ENCODE measurements at regions of chr11 and their contacts with region 1.

Region 1: DNA sequence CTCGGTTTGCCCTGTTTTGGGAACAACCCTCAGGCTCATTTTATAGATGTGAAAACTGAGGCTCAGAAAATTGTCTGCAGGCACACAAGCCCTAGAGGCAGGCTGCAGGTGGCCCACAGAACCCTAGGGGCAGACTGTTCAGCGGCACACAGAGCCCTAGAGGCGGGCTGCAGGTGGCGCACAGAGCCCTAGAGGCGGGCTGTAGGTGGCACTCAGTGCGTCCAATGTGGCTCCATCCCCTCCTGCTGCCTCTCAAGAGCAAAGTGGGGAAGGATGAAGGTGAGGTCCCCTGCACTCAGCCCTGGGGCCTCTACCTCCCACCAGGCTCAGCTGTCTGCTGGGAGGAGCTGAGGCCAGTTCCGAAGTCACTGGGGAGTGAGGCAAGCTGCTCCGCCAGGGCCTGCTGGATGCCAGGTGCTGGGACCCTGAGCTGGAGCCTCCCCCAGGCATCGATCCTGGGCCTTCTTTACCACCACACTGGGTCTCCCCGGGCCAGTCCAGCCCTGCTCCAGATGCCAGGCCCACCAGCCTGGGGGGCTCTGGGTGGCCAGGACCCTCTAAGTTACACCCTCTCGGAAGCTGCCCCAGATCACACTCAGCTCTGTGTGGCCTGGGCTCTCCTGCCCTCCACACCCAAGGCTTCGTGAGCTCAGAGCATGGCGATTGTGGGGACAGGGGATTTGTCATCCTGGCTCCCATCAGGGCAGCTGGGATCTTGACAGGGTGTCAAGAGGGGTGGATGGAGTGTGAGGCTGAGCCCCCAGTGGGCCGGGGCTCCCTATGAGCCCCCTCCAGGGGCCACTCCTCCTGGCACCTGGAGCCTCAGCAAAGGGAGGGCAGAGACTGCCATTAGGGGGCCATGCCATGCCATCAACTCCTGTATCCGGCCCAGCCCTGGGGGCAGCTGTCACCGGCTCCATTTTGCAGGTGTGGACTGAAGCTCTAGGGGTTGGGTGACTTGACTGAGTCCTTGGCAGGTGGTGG is 2.1 kb downstream of the ACY3 start:
- DNase-seq: peak; percentile 56
- ATAC-seq: peak; percentile 99
- H3K4me3 ChIP-seq: no peak overlapping the region
- H3K27ac ChIP-seq: no peak overlapping the region
- H3K4me1 ChIP-seq: peaks cover 26% of the 10 kb centered on the region
- H3K27me3 ChIP-seq: no peaks in the 10 kb centered on the region
- CTCF ChIP-seq: peak; percentile 81
- EP300 ChIP-seq: no peak
- POLR2A ChIP-seq: no peak
- RAD21 ChIP-seq: peak; percentile 79

Region 2: DNA sequence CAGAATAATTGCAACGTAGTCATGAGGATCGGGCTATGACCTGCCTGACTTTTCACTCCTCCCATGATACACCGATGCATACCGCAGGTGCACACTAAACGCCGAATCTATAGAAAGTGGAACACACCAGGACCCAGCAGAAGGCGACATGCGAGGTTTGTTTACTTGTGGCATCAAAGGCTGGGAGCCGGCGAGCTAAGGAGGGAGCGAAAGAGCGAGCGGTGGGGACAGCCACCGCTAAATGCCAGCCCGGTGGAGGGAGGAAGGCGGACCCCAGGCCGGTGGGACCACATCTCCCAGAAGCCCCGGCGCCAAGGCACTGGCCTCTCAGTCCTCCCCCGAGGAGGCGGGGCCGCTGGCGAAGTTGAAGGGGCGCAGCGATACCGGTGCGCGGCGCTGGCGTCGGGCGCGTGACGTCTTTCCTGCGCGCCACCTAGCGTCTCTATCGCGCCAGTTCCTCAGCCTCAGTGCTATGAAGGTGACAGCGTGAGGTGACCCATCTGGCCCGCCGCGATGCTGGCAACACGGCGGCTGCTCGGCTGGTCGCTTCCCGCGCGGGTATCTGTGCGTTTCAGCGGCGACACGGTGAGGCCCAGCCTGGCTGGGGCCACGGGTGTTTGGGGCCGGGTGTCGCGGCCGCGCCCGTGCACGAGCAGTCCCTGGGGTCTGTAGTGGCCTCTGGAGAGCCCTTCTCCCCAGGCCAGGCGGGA is 41.8 kb before region 1 on chr11 and contains the start of gene NDUFV1:
- CTCF ChIA-PET with region 1: no interaction called
- POLR2A ChIA-PET with region 1: no interaction called
- in situ Hi-C with region 1: no loop called
- intact Hi-C with region 1: no loop called
- DNase-seq: peak; percentile 90
- ATAC-seq: peak; percentile 97
- H3K4me3 ChIP-seq: peak within 1 kb of the TSS; percentile 81 to 92 (median 88)
- H3K27ac ChIP-seq: peak within 1 kb of the TSS; percentile 37
- H3K4me1 ChIP-seq: peaks cover 21% of the 10 kb centered on the region
- H3K27me3 ChIP-seq: peaks cover 2 to 10% of the 10 kb centered on the region in 2 experiments; a peak in 2 of 5 replicates
- CTCF ChIP-seq: peak; percentile 96
- EP300 ChIP-seq: no peak
- POLR2A ChIP-seq: peak; percentile 59 to 74
- RAD21 ChIP-seq: peak; percentile 68
- total RNA-seq, gene NDUFV1: 137 and 140 TPM in 2 replicates

Region 3: GRCh38 chr11:67630228-67630942 is 18.0 kb before region 1 on chr11:
- CTCF ChIA-PET with region 1: interaction called, 5 read pairs
- POLR2A ChIA-PET with region 1: interaction called, 27 read pairs
- in situ Hi-C with region 1: no loop called
- intact Hi-C with region 1: no loop called
- DNase-seq: peak; percentile 92
- ATAC-seq: peak; percentile 67
- H3K4me3 ChIP-seq: peak overlapping the region; percentile 49 to 86 (median 71)
- H3K27ac ChIP-seq: peak overlapping the region; percentile 84
- H3K4me1 ChIP-seq: peaks cover 64% of the 10 kb centered on the region
- H3K27me3 ChIP-seq: no peaks in the 10 kb centered on the region; a peak in 2 of 5 replicates
- CTCF ChIP-seq: peak; percentile 97
- EP300 ChIP-seq: 0 out of 4 replicates have a peak, but pooled peaks of 1 of the 2 experiments have one; percentile 41
- POLR2A ChIP-seq: peak in 1 of 2 experiments; percentile 65; a peak in 2 of 4 replicates
- RAD21 ChIP-seq: peak; percentile 84; the same call in 1 of the 2 replicates

Region 4: GRCh38 chr11:67685641-67686495 is 37.4 kb after region 1 on chr11:
- CTCF ChIA-PET with region 1: no interaction called
- POLR2A ChIA-PET with region 1: no interaction called
- in situ Hi-C with region 1: no loop called
- intact Hi-C with region 1: no loop called
- DNase-seq: no peak
- ATAC-seq: no peak
- H3K4me3 ChIP-seq: no peak overlapping the region
- H3K27ac ChIP-seq: no peak overlapping the region
- H3K4me1 ChIP-seq: no peaks in the 10 kb centered on the region
- H3K27me3 ChIP-seq: peaks cover 1 to 6% of the 10 kb centered on the region in 2 experiments; a peak in 2 of 5 replicates
- CTCF ChIP-seq: no peak
- EP300 ChIP-seq: no peak
- POLR2A ChIP-seq: no peak
- RAD21 ChIP-seq: no peak

Measured in HepG2 (cell line).